IMR-90 (cell line): ENCODE measurements at regions of chr2 and their contacts with region 1.

Region 1: GRCh38 chr2:216643986-216644659 is 10.9 kb downstream of the IGFBP2 start:
- DNase-seq: peak; percentile 31
- ATAC-seq: peak; percentile 77
- H3K4me3 ChIP-seq: no peak overlapping the region
- H3K27ac ChIP-seq: no peak overlapping the region
- H3K4me1 ChIP-seq: peaks cover 10% of the 10 kb centered on the region; the same call in 1 of the 2 replicates
- H3K27me3 ChIP-seq: no peaks in the 10 kb centered on the region
- CTCF ChIP-seq: no peak
- POLR2A ChIP-seq: no peak
- RAD21 ChIP-seq: no peak

Region 2: DNA sequence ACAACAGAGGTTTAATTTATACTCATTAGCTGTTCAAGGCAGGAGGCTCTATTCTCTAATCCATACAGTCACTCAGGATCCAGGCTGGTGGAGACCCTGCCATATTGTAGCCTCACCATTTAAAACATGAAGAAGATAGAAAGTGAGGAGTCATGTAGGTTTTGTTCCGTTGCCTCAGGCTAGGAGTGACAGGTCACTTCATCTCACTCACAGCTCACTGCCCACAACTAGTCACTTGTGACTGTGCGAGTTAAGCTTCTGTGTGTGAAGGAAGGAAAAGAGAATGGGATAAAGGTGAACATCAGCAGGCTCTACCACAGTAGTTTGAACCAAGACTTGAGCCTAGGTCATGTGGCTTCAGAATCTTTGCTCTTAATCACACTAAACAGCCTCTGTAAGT is 19.9 kb before region 1 on chr2:
- CTCF ChIA-PET with region 1: interaction called, 10 read pairs
- POLR2A ChIA-PET with region 1: no interaction called
- dilution Hi-C with region 1: no loop called
- in situ Hi-C with region 1: no loop called
- intact Hi-C with region 1: no loop called
- DNase-seq: no peak
- ATAC-seq: no peak
- H3K4me3 ChIP-seq: no peak overlapping the region
- H3K27ac ChIP-seq: no peak overlapping the region
- H3K4me1 ChIP-seq: peaks cover 7% of the 10 kb centered on the region; the same call in 1 of the 2 replicates
- H3K27me3 ChIP-seq: peaks cover 17% of the 10 kb centered on the region
- CTCF ChIP-seq: no peak
- POLR2A ChIP-seq: no peak
- RAD21 ChIP-seq: no peak